GM12878 (cell line): ENCODE measurements at regions of chr1 and their contacts with region 1.

Region 1: DNA sequence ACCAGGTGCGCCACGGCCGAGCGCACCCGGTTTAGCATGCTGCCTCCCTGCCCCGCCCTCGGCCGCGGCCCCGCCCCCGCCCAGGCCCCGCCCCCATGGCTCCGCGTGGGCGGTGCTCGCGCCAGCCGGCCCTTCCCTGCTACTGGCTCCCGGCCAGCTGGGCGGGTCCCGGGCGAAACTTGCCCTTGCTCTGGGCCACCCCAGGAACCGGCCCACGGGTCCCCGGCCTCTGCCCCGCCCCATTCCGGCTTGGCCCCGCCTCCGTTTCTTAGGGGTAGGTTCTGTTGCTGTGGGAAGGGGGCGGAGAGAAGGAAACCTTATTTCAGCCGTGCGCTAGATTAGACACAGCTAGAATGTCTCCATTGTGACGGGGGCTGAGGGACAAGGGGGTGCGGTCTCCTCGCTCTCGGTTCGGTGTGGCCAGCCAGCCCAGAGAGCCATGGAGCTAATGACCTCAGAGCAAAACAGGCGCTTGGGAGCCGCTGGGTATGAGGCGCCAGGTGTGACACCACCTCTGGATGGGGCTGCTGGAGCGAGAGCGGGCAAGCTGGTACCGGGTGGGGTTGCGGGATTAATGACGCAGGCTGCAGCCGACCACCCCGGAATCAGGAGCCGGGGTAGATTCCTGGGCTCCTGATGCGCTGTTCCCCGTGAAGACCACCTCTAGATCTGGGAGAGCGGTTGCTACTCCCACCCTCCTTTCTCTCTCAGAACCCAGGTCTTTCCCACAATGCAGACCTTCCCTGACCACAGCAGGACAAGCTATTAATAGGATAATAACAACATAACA is at the start of gene PPM1J:
- DNase-seq: peak; percentile 60
- ATAC-seq: peak; percentile 87
- H3K4me3 ChIP-seq: peak within 1 kb of the TSS; percentile 79
- H3K27ac ChIP-seq: no peak within 1 kb of the TSS
- H3K4me1 ChIP-seq: peaks cover 22% of the 10 kb centered on the region
- H3K27me3 ChIP-seq: peaks cover 0 to 3% of the 10 kb centered on the region in 2 experiments; a peak in 1 of 4 replicates
- CTCF ChIP-seq: no peak
- EP300 ChIP-seq: no peak
- POLR2A ChIP-seq: no peak
- RAD21 ChIP-seq: no peak
- polyA plus RNA-seq, gene PPM1J: 0.07 TPM in 1 of 2 experiments, not detected in the other

Region 2: DNA sequence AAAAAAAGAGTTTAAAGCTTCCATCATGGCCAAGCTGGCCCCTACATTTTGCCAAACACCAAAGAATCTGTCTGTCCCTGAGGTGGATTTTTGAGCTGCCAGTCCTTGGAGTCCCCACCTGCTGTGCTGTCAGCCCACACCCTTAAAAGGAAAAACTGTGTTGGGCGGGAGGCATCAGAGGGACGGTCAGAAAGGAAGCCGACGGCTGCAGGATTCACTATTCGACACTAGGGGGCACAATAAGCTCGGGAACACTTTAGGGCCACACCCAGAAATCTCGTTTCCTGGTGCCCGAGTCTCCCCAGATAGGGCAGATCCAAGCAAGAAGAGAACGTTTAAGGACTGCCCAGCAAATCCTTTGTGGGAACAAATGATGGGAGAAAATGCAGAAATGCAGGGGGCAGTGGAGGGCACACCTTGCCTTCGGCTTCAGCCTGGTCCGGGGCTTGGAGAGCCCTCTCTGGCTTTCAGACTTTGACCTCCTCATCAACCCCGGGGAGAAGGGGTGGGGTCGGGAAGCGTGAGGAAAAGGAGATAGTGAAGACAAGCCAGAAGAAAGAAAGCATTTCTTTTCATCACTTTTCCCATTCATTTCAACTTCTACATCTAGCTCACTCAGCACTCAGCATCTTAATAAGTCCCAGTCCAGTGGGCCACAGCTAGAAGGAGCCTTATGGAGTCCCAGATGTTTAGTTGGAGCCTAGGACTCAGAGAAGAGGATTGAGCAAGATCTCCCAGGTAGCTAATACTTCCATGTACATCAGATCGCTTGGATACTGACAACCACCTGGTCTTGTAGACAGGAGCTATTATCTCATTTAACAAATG is 324.5 kb before region 1 on chr1:
- CTCF ChIA-PET with region 1: interaction called, 122 read pairs
- POLR2A ChIA-PET with region 1: interaction called, 6 read pairs
- RAD21 ChIA-PET with region 1: interaction called, 53 read pairs
- SMC1A ChIA-PET with region 1: interaction called, 47 read pairs
- in situ Hi-C with region 1: no loop called
- intact Hi-C with region 1: loop called (anchors 2 kb)
- DNase-seq: peak; percentile 63
- ATAC-seq: peak; percentile 81
- H3K4me3 ChIP-seq: peak overlapping the region; percentile 79
- H3K27ac ChIP-seq: no peak overlapping the region
- H3K4me1 ChIP-seq: peaks cover 18% of the 10 kb centered on the region
- H3K27me3 ChIP-seq: no peaks in the 10 kb centered on the region
- CTCF ChIP-seq: peak; percentile 88 to 96 (median 95)
- EP300 ChIP-seq: no peak
- POLR2A ChIP-seq: no peak
- RAD21 ChIP-seq: peak; percentile 94

Region 3: GRCh38 chr1:112619520-112620376 is 95.7 kb before region 1 on chr1 and contains the start of gene CAPZA1:
- CTCF ChIA-PET with region 1: interaction called, 21 read pairs
- POLR2A ChIA-PET with region 1: interaction called, 6 read pairs
- RAD21 ChIA-PET with region 1: interaction called, 7 read pairs
- SMC1A ChIA-PET with region 1: interaction called, 10 read pairs
- in situ Hi-C with region 1: no loop called
- intact Hi-C with region 1: loop called (anchors 2 kb)
- DNase-seq: peak; percentile 62
- ATAC-seq: peak; percentile 85
- H3K4me3 ChIP-seq: peak within 1 kb of the TSS; percentile 77
- H3K27ac ChIP-seq: peak within 1 kb of the TSS; percentile 100
- H3K4me1 ChIP-seq: peaks cover 4% of the 10 kb centered on the region
- H3K27me3 ChIP-seq: no peaks in the 10 kb centered on the region
- CTCF ChIP-seq: no peak
- EP300 ChIP-seq: peak in 1 of 2 experiments; percentile 32; a peak in 1 of 4 replicates
- POLR2A ChIP-seq: peak; percentile 93
- RAD21 ChIP-seq: no peak
- polyA plus RNA-seq, gene CAPZA1: 401 to 886 TPM

Region 4: DNA sequence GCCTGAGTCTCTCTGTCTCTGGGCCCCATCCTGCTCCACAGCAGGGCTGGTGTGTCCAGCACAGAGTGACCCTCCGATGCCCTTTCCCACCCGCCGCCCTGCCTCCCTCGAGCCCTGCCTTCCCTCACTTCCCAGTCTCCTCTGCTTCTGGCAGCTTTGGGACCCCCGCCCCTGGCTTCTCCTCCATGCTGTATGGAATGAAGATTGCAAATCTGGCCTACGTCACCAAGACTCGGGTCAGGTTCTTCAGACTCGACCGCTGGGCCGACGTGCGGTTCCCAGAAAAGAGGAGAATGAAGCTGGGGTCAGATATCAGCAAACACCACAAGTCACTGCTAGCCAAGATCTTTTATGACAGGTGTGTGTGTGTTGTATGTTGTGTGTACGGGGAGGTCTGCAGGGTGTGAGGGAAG is 26.7 kb before region 1 on chr1:
- CTCF ChIA-PET with region 1: no interaction called
- POLR2A ChIA-PET with region 1: no interaction called
- RAD21 ChIA-PET with region 1: no interaction called
- SMC1A ChIA-PET with region 1: no interaction called
- in situ Hi-C with region 1: no loop called
- intact Hi-C with region 1: no loop called
- DNase-seq: no peak
- ATAC-seq: no peak
- H3K4me3 ChIP-seq: no peak overlapping the region
- H3K27ac ChIP-seq: no peak overlapping the region
- H3K4me1 ChIP-seq: peaks cover 11% of the 10 kb centered on the region; the same call in 1 of the 2 replicates
- H3K27me3 ChIP-seq: no peaks in the 10 kb centered on the region
- CTCF ChIP-seq: no peak
- EP300 ChIP-seq: no peak
- POLR2A ChIP-seq: no peak
- RAD21 ChIP-seq: no peak

Region 5: DNA sequence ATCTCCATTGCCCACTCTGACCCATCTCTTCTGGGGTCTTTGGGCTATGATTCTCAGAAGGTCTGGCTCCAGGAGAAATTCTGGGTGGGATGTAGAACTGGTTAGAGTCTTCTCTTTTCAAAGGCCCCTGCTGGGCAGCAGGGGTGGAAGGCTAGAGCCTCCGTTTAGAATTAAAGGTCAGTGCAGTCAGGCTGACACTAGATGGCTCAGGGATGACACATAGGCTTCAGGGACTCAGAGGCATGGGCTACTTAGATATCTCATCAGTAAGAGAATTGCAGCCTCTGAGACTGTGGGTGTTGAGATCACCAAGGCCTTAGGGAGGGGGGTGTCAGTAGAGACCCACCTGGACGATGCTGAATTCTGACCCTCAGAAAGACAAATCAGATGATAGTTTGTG is 12.3 kb after region 1 on chr1:
- CTCF ChIA-PET with region 1: interaction called, 33 read pairs
- POLR2A ChIA-PET with region 1: no interaction called
- RAD21 ChIA-PET with region 1: interaction called, 3 read pairs
- SMC1A ChIA-PET with region 1: interaction called, 4 read pairs
- in situ Hi-C with region 1: no loop called
- intact Hi-C with region 1: no loop called
- DNase-seq: no peak
- ATAC-seq: peak; percentile 51; the same call in 2 of the 3 replicates
- H3K4me3 ChIP-seq: no peak overlapping the region
- H3K27ac ChIP-seq: no peak overlapping the region
- H3K4me1 ChIP-seq: no peaks in the 10 kb centered on the region
- H3K27me3 ChIP-seq: no peaks in the 10 kb centered on the region; a peak in 1 of 4 replicates
- CTCF ChIP-seq: no peak
- EP300 ChIP-seq: no peak
- POLR2A ChIP-seq: no peak
- RAD21 ChIP-seq: 0 out of 2 replicates have a peak, but pooled peaks have one; percentile 10

Region 6: GRCh38 chr1:112754116-112754628 is 38.7 kb after region 1 on chr1:
- CTCF ChIA-PET with region 1: no interaction called
- POLR2A ChIA-PET with region 1: no interaction called
- RAD21 ChIA-PET with region 1: no interaction called
- SMC1A ChIA-PET with region 1: no interaction called
- in situ Hi-C with region 1: no loop called
- intact Hi-C with region 1: no loop called
- DNase-seq: no peak
- ATAC-seq: no peak
- H3K4me3 ChIP-seq: no peak overlapping the region
- H3K27ac ChIP-seq: no peak overlapping the region
- H3K4me1 ChIP-seq: no peaks in the 10 kb centered on the region
- H3K27me3 ChIP-seq: no peaks in the 10 kb centered on the region; a peak in 1 of 4 replicates
- CTCF ChIP-seq: no peak
- EP300 ChIP-seq: no peak
- POLR2A ChIP-seq: no peak
- RAD21 ChIP-seq: no peak

Region 7: DNA sequence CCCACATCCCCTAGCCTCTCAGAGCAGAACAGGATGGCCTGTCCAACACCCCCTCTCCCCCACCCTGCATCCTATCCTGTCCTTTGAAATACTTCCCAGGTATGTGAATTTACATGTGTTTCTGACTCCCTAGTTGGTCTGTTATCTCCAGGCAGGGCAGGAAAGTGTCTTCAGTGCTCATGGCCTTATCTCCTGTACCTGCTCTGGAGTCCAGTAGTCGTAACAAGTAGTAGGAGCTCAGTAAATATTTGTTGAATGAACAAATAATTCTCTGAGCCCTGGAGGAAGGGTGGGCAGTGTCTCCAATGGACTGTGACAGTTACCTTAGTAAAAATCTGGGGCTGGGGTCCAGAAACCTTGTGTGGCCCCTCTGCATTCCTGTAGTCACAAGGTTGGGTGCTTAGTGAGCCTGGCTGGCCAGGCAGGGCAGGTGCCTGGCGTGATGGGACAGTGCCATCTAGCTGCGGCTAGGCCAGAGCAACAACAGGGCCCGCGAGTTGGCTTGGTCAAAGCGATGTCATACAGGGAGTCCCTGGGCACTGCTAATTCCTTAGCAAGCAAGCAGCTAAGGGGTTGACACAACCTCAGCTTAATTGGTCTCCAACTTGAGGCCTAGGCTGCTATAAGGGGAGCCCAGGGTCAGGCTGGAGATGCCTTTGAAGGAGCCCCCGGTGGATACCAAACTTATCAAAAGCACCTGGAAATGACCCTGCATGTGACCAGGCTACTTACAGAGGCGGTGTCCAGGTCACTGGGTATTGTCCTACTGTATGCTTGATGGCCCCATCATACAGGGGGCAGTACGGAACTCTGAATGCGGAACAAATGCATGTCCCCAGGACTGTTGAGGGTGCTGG is 88.7 kb after region 1 on chr1:
- CTCF ChIA-PET with region 1: interaction called, 428 read pairs
- POLR2A ChIA-PET with region 1: interaction called, 3 read pairs
- RAD21 ChIA-PET with region 1: interaction called, 192 read pairs
- SMC1A ChIA-PET with region 1: interaction called, 178 read pairs
- in situ Hi-C with region 1: loop called (anchors 5 kb)
- intact Hi-C with region 1: loop called (anchors 1 kb)
- DNase-seq: peak; percentile 4
- ATAC-seq: peak; percentile 99
- H3K4me3 ChIP-seq: no peak overlapping the region
- H3K27ac ChIP-seq: no peak overlapping the region
- H3K4me1 ChIP-seq: peaks cover 4% of the 10 kb centered on the region; the same call in 1 of the 2 replicates
- H3K27me3 ChIP-seq: peaks cover 0 to 4% of the 10 kb centered on the region in 2 experiments; a peak in 1 of 4 replicates
- CTCF ChIP-seq: peak; percentile 88 to 95 (median 89)
- EP300 ChIP-seq: no peak
- POLR2A ChIP-seq: no peak
- RAD21 ChIP-seq: peak; percentile 92

Region 8: DNA sequence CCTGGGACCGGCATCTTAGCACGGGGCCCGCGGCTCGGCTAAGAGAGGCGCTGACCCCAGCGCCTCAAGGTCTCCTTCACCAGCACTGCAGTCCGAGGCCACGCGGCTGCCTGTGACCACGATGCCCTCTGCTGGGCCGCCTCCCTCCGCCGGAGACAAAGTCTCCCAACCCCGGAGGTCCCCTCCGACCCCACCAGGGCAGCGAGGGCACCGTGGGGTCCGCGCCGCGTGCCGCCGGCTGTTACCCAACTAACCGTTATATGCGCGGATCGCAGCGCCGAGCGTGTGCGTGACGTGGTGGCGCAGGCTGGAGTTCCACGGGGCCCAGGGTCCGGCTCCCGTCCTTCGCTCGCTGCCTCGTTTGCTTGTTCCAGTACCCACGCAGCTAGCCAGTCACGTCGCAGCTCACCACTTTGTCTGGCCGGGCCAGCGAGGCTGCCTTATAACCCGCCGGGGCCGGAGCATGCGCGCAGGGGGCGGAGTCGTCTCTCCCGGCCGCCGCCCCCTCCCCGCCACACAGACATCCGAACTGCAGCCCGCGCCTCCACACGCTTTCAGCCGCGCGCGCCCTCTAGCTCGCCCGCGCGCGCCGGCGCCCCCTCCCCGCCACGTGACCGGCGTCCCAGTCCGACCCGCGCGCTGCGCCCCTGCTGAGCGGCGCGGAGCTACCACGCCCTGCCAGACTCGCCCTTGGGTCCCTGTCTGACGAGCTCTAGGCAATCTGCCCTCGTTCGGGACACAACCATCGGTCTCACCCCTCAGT is 240.5 kb after region 1 on chr1 and contains the start of gene SLC16A1:
- CTCF ChIA-PET with region 1: interaction called, 7 read pairs
- POLR2A ChIA-PET with region 1: no interaction called
- RAD21 ChIA-PET with region 1: interaction called, 7 read pairs
- SMC1A ChIA-PET with region 1: interaction called, 3 read pairs
- in situ Hi-C with region 1: no loop called
- intact Hi-C with region 1: loop called (anchors 2 kb)
- DNase-seq: peak; percentile 66
- ATAC-seq: peak; percentile 81
- H3K4me3 ChIP-seq: peak within 1 kb of the TSS; percentile 82
- H3K27ac ChIP-seq: peak within 1 kb of the TSS; percentile 93
- H3K4me1 ChIP-seq: no peaks in the 10 kb centered on the region
- H3K27me3 ChIP-seq: no peaks in the 10 kb centered on the region
- CTCF ChIP-seq: peak; percentile 4 to 43 (median 22); a peak in 3 of 6 replicates
- EP300 ChIP-seq: no peak
- POLR2A ChIP-seq: peak; percentile 100
- RAD21 ChIP-seq: peak; percentile 24; the same call in 1 of the 2 replicates
- polyA plus RNA-seq, gene SLC16A1: 40.1 to 45.2 TPM

Region 9: GRCh38 chr1:113389953-113390834 is 674.7 kb after region 1 on chr1 and contains the start of gene MAGI3:
- CTCF ChIA-PET with region 1: interaction called, 3 read pairs
- POLR2A ChIA-PET with region 1: no interaction called
- RAD21 ChIA-PET with region 1: no interaction called
- SMC1A ChIA-PET with region 1: no interaction called
- in situ Hi-C with region 1: no loop called
- intact Hi-C with region 1: loop called (anchors 10 kb)
- DNase-seq: peak; percentile 68
- ATAC-seq: peak; percentile 99
- H3K4me3 ChIP-seq: peak within 1 kb of the TSS; percentile 68
- H3K27ac ChIP-seq: no peak within 1 kb of the TSS
- H3K4me1 ChIP-seq: peaks cover 2% of the 10 kb centered on the region; the same call in 1 of the 2 replicates
- H3K27me3 ChIP-seq: peaks cover 0 to 10% of the 10 kb centered on the region in 2 experiments; a peak in 2 of 4 replicates
- CTCF ChIP-seq: no peak
- EP300 ChIP-seq: no peak
- POLR2A ChIP-seq: peak; percentile 59
- RAD21 ChIP-seq: no peak
- polyA plus RNA-seq, gene MAGI3: 0.24 to 0.29 TPM